AG04449 (cell line): ENCODE measurements at regions of chr12 and their contacts with region 1.

Region 1: DNA sequence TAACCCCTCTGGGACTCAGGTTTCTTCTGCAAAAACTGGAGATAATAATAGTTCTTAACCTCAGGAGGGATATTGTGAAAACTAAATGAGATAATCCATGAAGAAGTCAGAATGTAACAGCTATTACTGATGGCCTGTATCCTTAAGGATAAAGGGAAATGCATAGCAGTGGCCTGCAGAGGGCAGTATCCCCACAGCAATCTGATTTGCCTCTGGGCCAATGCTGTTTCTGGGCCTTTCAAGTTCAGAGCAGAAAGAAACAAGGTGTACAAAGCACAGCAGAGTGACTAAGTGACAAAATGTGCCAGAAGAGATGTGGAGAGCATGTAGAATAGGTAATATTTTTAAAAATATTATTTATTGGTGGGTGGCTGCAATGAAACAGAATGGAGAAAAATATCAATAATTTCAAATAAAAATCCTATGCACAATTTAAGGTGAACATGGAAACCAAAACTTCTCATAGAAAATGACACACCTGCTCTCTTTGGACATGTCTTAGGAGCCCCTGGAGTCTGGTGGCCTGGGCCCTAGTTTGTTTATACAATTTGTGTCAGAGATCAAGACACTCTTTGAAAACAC is 90.3 kb downstream of the C12orf75 start:
- DNase-seq: peak; percentile 33
- H3K4me3 ChIP-seq: no peak overlapping the region
- CTCF ChIP-seq: peak; percentile 79

Region 2: GRCh38 chr12:105433804-105434203 is 13.1 kb after region 1 on chr12:
- CTCF ChIA-PET with region 1: interaction called, 22 read pairs
- POLR2A ChIA-PET with region 1: no interaction called
- DNase-seq: no peak
- H3K4me3 ChIP-seq: no peak overlapping the region
- CTCF ChIP-seq: no peak

Region 3: DNA sequence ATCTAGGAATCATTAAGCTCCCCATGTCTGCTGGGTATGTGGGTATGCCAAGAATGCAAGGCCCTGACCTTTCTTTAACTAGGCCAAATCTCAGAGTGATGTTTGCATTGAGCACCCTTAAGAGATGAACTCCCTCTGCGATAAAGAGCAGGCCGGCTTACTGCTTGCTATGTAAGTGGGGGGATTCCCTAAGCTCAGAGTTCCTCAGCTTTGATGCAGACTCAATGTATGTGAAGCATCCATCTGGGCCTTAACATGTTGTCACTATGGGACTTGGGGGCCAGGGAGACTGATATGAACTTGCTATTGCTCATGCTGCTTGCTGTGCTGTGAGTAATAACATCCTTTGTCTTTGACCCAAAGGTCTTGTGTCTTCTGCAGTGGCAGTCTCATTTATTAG is 59.4 kb after region 1 on chr12:
- CTCF ChIA-PET with region 1: no interaction called
- POLR2A ChIA-PET with region 1: no interaction called
- DNase-seq: no peak
- H3K4me3 ChIP-seq: no peak overlapping the region
- CTCF ChIP-seq: no peak

Region 4: GRCh38 chr12:105622846-105623736 is 202.3 kb after region 1 on chr12:
- CTCF ChIA-PET with region 1: no interaction called
- POLR2A ChIA-PET with region 1: no interaction called
- DNase-seq: no peak
- H3K4me3 ChIP-seq: no peak overlapping the region
- CTCF ChIP-seq: no peak

Region 5: GRCh38 chr12:106149096-106149784 is 728.5 kb after region 1 on chr12:
- CTCF ChIA-PET with region 1: interaction called, 21 read pairs
- POLR2A ChIA-PET with region 1: no interaction called
- DNase-seq: no peak
- H3K4me3 ChIP-seq: no peak overlapping the region
- CTCF ChIP-seq: peak; percentile 58